ENCODE measurements at regions of chr22 and their contacts with region 1.

Region 1: DNA sequence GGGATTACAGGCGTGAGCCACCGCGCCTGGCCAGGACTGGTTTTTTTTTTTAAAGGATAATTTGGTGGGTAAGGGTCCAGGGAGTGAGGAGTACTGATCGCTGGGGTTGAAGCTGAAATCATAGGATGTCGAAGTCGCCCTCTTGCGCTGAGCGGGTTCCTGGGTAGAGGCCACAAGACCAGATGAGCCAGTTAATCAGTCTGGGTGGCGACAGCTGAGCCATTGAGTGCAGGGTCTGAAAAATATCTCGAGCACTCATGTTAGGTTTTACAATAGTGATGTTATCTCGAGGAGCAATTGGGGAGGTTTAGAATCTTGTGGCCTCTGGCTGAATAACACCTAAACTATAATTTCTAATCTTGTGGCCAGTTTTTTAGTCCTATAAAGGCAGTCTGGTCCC is 7.8 kb downstream of the APOL5 start:
- DNase-seq: no peak
- H3K4me3 ChIP-seq: no peak overlapping the region
- H3K27ac ChIP-seq: no peak overlapping the region
- H3K4me1 ChIP-seq: no peaks in the 10 kb centered on the region
- H3K27me3 ChIP-seq: no peaks in the 10 kb centered on the region
- CTCF ChIP-seq: no peak
- POLR2A ChIP-seq: no peak

Region 2: GRCh38 chr22:35399678-35400334 is 325.7 kb before region 1 on chr22 and contains the start of gene MCM5:
- intact Hi-C with region 1: no loop called
- DNase-seq: peak; percentile 96 to 97
- H3K4me3 ChIP-seq: peak within 1 kb of the TSS; percentile 66 to 86
- H3K27ac ChIP-seq: peak within 1 kb of the TSS; percentile 70 to 74
- H3K4me1 ChIP-seq: peaks cover 0 to 8% of the 10 kb centered on the region in 2 donors
- H3K27me3 ChIP-seq: no peaks in the 10 kb centered on the region
- CTCF ChIP-seq: no peak
- POLR2A ChIP-seq: no peak
- total RNA-seq, gene MCM5: 15.9 to 60.6 (median 40.3) TPM

Region 3: GRCh38 chr22:35739076-35739930 is 13.8 kb after region 1 on chr22:
- intact Hi-C with region 1: loop called (anchors 2 kb)
- DNase-seq: no peak
- H3K4me3 ChIP-seq: no peak overlapping the region
- H3K27ac ChIP-seq: no peak overlapping the region
- H3K4me1 ChIP-seq: no peaks in the 10 kb centered on the region
- H3K27me3 ChIP-seq: no peaks in the 10 kb centered on the region
- CTCF ChIP-seq: peak in 1 of 4 experiments; percentile 13
- POLR2A ChIP-seq: no peak